ENCODE measurements at regions of chr10 and their contacts with region 1.

Region 1: DNA sequence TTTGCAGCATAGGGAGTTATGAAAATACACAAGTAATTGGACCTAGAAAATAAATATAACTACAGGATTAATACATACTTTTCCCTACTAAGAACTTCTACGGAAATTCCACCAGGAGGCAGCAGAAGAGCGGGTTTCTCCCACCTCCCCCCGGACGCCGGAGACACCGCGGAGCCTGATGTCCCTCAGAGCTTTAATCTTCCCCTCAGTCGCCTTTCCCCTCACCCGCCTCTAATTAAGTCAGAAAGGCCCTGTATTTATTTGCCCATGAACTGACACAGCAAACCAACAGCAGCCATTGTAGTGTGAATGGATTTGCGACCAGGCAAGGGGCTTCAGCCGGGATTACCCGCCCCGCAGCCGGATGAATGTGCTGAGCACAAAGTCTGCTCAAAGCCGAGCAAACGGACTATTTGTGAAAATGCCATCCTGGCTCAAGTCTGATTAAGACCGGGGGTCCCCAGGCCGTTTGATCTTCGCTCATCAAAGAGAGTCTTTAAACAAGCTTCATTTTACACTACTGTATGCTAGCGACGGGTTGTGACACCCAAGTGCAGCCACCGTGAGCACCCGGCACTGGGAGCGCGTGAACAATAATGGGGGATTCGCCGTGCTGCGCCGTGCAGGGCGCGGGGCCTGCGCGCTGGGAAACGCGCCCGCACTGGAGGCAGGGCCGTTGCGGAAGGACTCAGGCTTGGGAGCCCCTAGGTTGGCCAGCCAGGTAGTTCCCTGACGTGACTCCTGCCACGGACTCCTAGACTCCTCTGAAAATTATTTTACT is 5.6 kb upstream of the DKK1 start:
- DNase-seq: peak; percentile 81 to 89 (median 88)
- H3K4me3 ChIP-seq: peak overlapping the region; percentile 45 to 80 (median 68)
- H3K27ac ChIP-seq: no peak overlapping the region
- H3K4me1 ChIP-seq: peaks cover under 1 to 11% (median 9%) of the 10 kb centered on the region in 4 experiments
- H3K27me3 ChIP-seq: peaks cover 10 to 42% (median 18%) of the 10 kb centered on the region in 5 experiments

Region 2: GRCh38 chr10:52488606-52489485 is 180.4 kb after region 1 on chr10:
- CTCF ChIA-PET with region 1: interaction called, 57 read pairs
- POLR2A ChIA-PET with region 1: no interaction called
- DNase-seq: peak; percentile 33 to 68 (median 59)
- H3K4me3 ChIP-seq: no peak overlapping the region
- H3K27ac ChIP-seq: no peak overlapping the region
- H3K4me1 ChIP-seq: no peaks in the 10 kb centered on the region
- H3K27me3 ChIP-seq: no peaks in the 10 kb centered on the region

Region 3: GRCh38 chr10:52566471-52567246 is 258.2 kb after region 1 on chr10:
- CTCF ChIA-PET with region 1: interaction called, 27 read pairs
- POLR2A ChIA-PET with region 1: no interaction called
- DNase-seq: peak; percentile 29 to 64 (median 61)
- H3K4me3 ChIP-seq: no peak overlapping the region
- H3K27ac ChIP-seq: no peak overlapping the region
- H3K4me1 ChIP-seq: no peaks in the 10 kb centered on the region
- H3K27me3 ChIP-seq: no peaks in the 10 kb centered on the region